Caco-2 (cell line): ENCODE measurements at regions of chr15 and their contacts with region 1.

Region 1: GRCh38 chr15:65086017-65086679 is 9.6 kb downstream of the KBTBD13 start:
- DNase-seq: peak; percentile 77 to 79
- H3K4me3 ChIP-seq: no peak overlapping the region
- H3K4me3 Mint-ChIP-seq: no peak overlapping the region
- H3K27ac Mint-ChIP-seq: peak overlapping the region; percentile 90
- H3K4me1 ChIP-seq: peaks cover 82% of the 10 kb centered on the region
- H3K4me1 Mint-ChIP-seq: peaks cover 75% of the 10 kb centered on the region
- H3K27me3 ChIP-seq: no peaks in the 10 kb centered on the region
- H3K27me3 Mint-ChIP-seq: no peaks in the 10 kb centered on the region
- CTCF ChIP-seq: peak; percentile 39 to 75

Region 2: DNA sequence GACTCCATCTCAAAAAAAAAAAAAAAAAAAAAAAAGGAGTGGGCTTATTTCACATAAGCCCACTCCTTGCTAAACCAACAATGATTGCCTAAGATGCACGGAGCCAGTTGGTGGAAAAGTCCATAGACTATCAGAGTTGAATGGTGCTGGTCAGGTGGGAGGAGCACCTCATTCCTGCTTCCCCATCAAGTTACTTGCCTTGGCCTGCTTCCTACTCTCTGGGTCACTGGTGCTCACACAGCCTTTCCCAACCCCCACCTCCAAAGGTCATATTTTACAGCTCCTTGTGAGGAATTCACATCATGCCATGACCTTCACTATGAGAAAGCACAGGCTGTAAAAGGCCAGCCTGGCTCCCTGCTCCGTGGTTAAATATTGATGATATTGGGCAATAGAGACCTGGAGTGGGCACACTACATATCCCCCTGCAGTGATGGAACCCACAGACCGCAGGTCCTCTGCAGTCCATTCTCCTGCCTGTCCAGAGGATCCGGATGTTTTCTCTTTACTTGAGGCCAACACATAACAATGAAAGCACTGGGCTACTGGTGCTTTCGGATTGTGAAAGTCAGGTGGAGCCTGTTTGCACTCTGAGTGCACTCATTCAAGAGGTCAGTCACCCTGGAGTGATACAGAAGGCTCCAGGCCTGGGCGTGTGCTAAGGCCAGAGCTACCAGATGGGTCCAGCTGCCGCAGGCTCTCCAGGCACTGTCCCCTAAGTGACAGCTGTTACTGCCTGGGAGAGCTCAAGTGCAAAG is 41.2 kb before region 1 on chr15 and contains the start of gene SLC51B:
- CTCF ChIA-PET with region 1: interaction called, 7 read pairs
- POLR2A ChIA-PET with region 1: interaction called, 9 read pairs
- intact Hi-C with region 1: loop called (anchors 1 kb)
- DNase-seq: peak; percentile 91 to 96
- H3K4me3 ChIP-seq: peak within 1 kb of the TSS; percentile 29
- H3K4me3 Mint-ChIP-seq: peak within 1 kb of the TSS; percentile 61
- H3K27ac Mint-ChIP-seq: peak within 1 kb of the TSS; percentile 70
- H3K4me1 ChIP-seq: peaks cover 59% of the 10 kb centered on the region
- H3K4me1 Mint-ChIP-seq: peaks cover 44% of the 10 kb centered on the region
- H3K27me3 ChIP-seq: no peaks in the 10 kb centered on the region
- H3K27me3 Mint-ChIP-seq: no peaks in the 10 kb centered on the region
- CTCF ChIP-seq: no peak
- total RNA-seq, gene SLC51B: 15.4 and 17.1 TPM in 2 replicates

Region 3: DNA sequence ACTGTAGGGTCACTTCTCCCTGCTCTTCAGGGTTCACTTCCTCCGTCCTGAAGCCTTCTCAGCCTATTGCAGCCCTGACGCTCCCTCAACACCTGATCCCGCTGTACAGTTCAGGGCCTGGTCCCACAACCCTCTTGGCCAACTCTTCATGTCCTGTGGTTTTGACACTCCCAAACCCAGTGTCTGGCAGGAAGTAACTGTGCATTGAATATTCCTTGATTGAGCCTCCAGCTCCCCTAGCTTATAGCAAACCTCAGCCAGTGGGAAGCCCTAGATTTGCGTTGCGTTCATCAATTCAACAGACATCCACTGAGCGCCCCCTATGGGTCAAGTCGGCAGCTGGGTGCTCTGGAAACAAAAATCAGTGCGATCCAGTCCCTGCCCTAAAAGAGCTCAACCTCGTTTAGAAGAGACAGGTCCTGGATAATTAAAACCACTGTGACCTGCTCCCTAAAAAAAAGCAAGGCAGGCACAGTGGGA is 15.3 kb after region 1 on chr15:
- CTCF ChIA-PET with region 1: interaction called, 65 read pairs
- POLR2A ChIA-PET with region 1: interaction called, 4 read pairs
- intact Hi-C with region 1: loop called (anchors 1 kb)
- DNase-seq: peak; percentile 66 to 81
- H3K4me3 ChIP-seq: no peak overlapping the region
- H3K4me3 Mint-ChIP-seq: no peak overlapping the region
- H3K27ac Mint-ChIP-seq: peak overlapping the region; percentile 9
- H3K4me1 ChIP-seq: no peaks in the 10 kb centered on the region
- H3K4me1 Mint-ChIP-seq: peaks cover 6% of the 10 kb centered on the region
- H3K27me3 ChIP-seq: no peaks in the 10 kb centered on the region
- H3K27me3 Mint-ChIP-seq: no peaks in the 10 kb centered on the region
- CTCF ChIP-seq: peak; percentile 74 to 84

Region 4: DNA sequence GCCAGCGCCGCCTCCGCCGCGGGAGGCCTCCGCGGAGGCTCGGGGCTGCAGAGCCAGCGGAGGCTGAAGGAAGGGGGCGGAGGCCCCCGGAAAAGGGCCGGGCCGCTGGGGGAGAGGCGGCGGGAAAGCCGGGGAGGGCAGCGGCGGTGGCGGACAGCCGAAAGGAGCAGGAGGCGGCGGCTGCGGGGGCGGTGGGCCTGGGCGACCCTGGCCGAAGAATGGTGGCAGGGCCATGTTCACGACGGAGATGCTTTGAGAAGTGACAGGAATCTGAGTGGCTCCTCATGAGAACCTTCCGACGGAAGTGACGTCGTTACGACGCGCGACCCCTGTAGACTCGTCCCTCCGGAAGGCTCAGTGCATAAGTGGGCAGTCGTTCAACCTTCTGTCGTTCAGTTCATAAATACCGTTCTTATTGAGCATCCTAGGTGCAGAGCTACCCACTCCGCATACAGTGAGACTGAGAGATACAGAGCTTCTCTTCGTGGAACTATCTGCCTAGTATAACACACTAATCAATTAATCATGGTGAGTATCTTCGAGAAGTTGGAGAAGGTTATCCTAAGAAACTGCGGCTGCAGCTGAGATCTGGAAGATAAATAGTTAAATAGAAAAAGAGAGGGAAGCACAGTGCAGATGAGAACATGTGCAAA is 47.5 kb after region 1 on chr15 and contains the start of gene PDCD7:
- CTCF ChIA-PET with region 1: no interaction called
- POLR2A ChIA-PET with region 1: no interaction called
- intact Hi-C with region 1: loop called (anchors 2 kb)
- DNase-seq: peak; percentile 83 to 85
- H3K4me3 ChIP-seq: peak within 1 kb of the TSS; percentile 74
- H3K4me3 Mint-ChIP-seq: peak within 1 kb of the TSS; percentile 85
- H3K27ac Mint-ChIP-seq: peak within 1 kb of the TSS; percentile 86
- H3K4me1 ChIP-seq: 0 out of 2 replicates have a peak, but pooled peaks cover 3% of the 10 kb centered on the region
- H3K4me1 Mint-ChIP-seq: no peaks in the 10 kb centered on the region
- H3K27me3 ChIP-seq: no peaks in the 10 kb centered on the region
- H3K27me3 Mint-ChIP-seq: no peaks in the 10 kb centered on the region
- CTCF ChIP-seq: no peak
- total RNA-seq, gene PDCD7: 26.2 and 32.6 TPM in 2 replicates